ENCODE measurements at regions of chr19 and their contacts with region 1.

Region 1: GRCh38 chr19:17470068-17470841 is at the start of gene SLC27A1:
- DNase-seq: peak; percentile 98 to 99
- ATAC-seq: peak; percentile 68 to 70
- H3K4me3 ChIP-seq: peak within 1 kb of the TSS; percentile 74 to 91 (median 80)
- H3K27ac ChIP-seq: peak within 1 kb of the TSS; percentile 92 to 100 (median 96)
- H3K4me1 ChIP-seq: peaks cover 19 to 41% of the 10 kb centered on the region in 2 donors
- H3K27me3 ChIP-seq: no peaks in the 10 kb centered on the region
- CTCF ChIP-seq: peak in 1 of 5 experiments; percentile 6
- POLR2A ChIP-seq: peak; percentile 44 to 63
- total RNA-seq, gene SLC27A1: 20.7 to 53.8 (median 43.7) TPM

Region 2: GRCh38 chr19:17305517-17306284 is 164.6 kb before region 1 on chr19 and contains the start of gene MRPL34:
- in situ Hi-C with region 1: no loop called
- intact Hi-C with region 1: loop called (anchors 1 kb)
- DNase-seq: peak; percentile 94 to 98
- ATAC-seq: peak; percentile 69 to 72
- H3K4me3 ChIP-seq: peak within 1 kb of the TSS; percentile 64 to 83 (median 72)
- H3K27ac ChIP-seq: peak within 1 kb of the TSS; percentile 92 to 94 (median 94)
- H3K4me1 ChIP-seq: peaks cover 44 to 52% of the 10 kb centered on the region in 2 donors
- H3K27me3 ChIP-seq: no peaks in the 10 kb centered on the region
- CTCF ChIP-seq: peak; percentile 74 to 86 (median 82)
- POLR2A ChIP-seq: peak; percentile 69 to 75
- total RNA-seq, gene MRPL34: 145 to 369 (median 249) TPM

Region 3: DNA sequence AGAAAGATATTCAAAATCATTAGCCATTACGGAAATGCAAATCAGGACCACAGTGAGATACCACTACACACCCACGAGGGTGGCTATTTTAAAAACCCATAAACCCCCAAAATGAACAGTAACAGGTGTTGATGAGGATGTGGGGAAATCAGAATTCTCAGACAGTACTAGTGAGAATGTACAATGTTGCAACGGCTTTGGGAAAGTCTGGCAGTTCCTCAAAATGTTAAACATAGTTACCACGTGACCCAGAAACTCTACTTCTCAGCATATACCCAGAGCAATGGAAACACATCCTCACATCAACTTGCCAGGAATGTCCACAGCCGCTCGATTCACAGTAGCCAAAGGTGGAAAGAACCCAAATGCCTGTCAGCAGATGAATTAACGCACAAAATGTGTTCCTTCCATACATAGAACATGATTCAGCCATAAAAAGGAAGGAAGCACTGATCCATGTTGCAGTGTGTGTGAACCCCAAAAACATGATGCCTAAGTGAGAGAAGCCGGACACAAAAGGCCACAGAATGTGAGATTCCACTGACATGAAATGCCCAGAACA is 100.1 kb before region 1 on chr19:
- in situ Hi-C with region 1: no loop called
- intact Hi-C with region 1: loop called (anchors 5 kb)
- DNase-seq: peak; percentile 76 to 83
- ATAC-seq: peak; percentile 96
- H3K4me3 ChIP-seq: peak overlapping the region in 3 of 4 donors; percentile 17 to 29 (median 24)
- H3K27ac ChIP-seq: peak overlapping the region; percentile 81 to 93 (median 92)
- H3K4me1 ChIP-seq: peaks cover 15 to 18% of the 10 kb centered on the region in 2 donors
- H3K27me3 ChIP-seq: no peaks in the 10 kb centered on the region
- CTCF ChIP-seq: no peak
- POLR2A ChIP-seq: no peak

Region 4: GRCh38 chr19:17419621-17420466 is 50.4 kb before region 1 on chr19 and contains the start of gene MVB12A:
- in situ Hi-C with region 1: no loop called
- intact Hi-C with region 1: loop called (anchors 5 kb)
- DNase-seq: peak; percentile 95 to 97
- ATAC-seq: peak; percentile 99 to 100
- H3K4me3 ChIP-seq: peak within 1 kb of the TSS; percentile 73 to 99 (median 86)
- H3K27ac ChIP-seq: peak within 1 kb of the TSS; percentile 71 to 85 (median 82)
- H3K4me1 ChIP-seq: peaks cover 11% of the 10 kb centered on the region in 2 donors
- H3K27me3 ChIP-seq: peaks cover 0 to under 1% (median under 1%) of the 10 kb centered on the region in 3 donors
- CTCF ChIP-seq: peak in 1 of 5 experiments; percentile 7
- POLR2A ChIP-seq: peak in 1 of 2 donors; percentile 45
- total RNA-seq, gene MVB12A: 35.8 to 62.7 (median 52.3) TPM

Region 5: GRCh38 chr19:17555480-17555928 is 85.2 kb after region 1 on chr19 and contains the start of gene COLGALT1:
- in situ Hi-C with region 1: no loop called
- intact Hi-C with region 1: loop called (anchors 5 kb)
- DNase-seq: peak; percentile 97 to 98
- ATAC-seq: peak; percentile 95
- H3K4me3 ChIP-seq: peak within 1 kb of the TSS; percentile 62 to 100 (median 87)
- H3K27ac ChIP-seq: peak within 1 kb of the TSS; percentile 72 to 86 (median 85)
- H3K4me1 ChIP-seq: peaks cover 13 to 25% of the 10 kb centered on the region in 2 donors
- H3K27me3 ChIP-seq: no peaks in the 10 kb centered on the region
- CTCF ChIP-seq: peak in 1 of 5 experiments; percentile 19
- POLR2A ChIP-seq: peak; percentile 62 to 72
- total RNA-seq, gene COLGALT1: 16.6 to 33.2 (median 27.5) TPM

Measured in gastrocnemius medialis (tissue), 4 donors.